ENCODE measurements at regions of chr12 and their contacts with region 1.

Region 1: GRCh38 chr12:98894412-98895085 is 249.5 kb downstream of the APAF1 start:
- DNase-seq: peak; percentile 50 to 95 (median 62)

Region 2: DNA sequence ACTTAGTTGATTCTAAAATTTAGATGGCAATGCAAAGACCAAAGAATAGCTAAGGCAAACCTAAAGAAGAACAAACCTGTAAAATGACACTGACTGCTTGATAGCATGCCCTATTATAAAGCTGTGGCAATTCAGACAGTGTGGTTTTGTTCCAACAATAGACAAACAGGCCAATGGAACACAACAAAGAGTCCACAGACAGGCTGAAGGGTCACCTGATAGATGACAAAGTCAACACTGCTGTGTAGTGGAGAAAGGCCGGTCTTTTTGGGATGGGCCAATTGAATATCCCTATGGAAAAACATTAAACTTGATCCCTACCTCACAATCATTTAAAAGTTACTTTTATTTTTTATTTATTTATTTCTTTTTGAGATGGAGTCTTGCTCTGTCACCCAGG is 334.9 kb before region 1 on chr12:
- intact Hi-C with region 1: no loop called
- DNase-seq: peak in 3 of 10 donors; percentile 7 to 41 (median 35)

Region 3: DNA sequence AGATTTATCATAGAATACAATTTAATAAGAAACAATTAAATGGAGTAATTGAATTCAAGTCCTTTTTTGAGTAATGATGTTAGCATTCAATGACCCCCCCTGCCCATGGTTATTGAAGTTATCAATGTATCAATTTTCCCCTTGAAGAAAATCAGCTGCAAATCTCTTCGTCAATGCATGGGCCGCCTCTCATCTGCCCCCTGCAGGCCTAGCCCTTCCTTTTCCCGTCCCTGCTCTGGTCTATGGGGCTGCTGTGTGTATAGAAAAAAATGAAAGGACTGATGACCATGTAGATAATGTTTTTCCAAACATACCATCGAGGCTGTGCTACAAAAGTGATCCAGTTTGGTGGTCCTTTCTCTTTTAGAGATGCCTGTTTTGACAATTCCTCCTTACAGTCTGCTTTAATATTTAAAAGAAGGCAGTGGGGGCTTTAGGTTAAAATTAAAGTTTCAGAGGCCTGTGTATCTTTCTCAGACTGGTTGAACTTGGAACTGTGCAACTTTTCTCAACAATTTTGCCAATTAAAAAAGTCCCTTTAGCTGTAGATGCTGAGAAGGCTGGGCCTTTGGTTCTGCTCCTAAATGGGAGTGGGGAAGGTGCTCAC is 151.1 kb before region 1 on chr12:
- intact Hi-C with region 1: loop called (anchors 10 kb)
- DNase-seq: peak in 3 of 10 donors; percentile 59 to 93 (median 65)

Region 4: DNA sequence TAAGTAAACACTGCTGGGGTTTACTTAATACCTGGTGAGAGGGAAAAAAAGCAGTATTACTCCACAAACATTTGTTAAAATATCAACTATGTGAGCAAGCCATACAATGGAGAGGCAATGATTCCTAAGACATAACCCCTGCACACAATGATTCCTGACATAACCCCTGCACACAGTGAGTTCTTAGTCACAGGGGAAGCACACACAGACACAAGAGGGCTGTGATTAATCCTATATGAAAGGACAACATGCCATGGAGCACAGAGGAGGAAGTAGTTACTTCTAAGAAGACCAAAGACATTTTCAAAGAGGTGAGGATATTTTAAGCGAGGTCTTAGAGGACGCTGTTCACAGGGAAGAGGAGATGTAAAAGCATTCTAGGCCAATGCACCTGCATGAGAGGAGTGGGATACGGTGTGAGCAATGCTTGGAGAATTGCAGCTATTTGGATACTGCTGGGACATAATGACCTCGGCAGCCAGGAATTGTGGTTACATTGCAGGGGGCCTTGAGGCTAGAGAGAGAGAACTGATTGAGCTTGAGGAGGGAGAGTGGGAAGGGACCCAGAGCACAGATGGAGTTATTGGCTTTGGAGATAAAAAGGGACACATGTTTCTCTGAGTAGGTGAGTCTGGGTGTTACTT is 37.5 kb before region 1 on chr12:
- intact Hi-C with region 1: no loop called
- DNase-seq: no peak

Region 5: GRCh38 chr12:100163416-100164152 is 1269.0 kb after region 1 on chr12:
- intact Hi-C with region 1: no loop called
- DNase-seq: peak; percentile 40 to 96 (median 66)

Measured in posterior cingulate gyrus (tissue), 11 donors.